ENCODE measurements at regions of chr17 and their contacts with region 1.

Region 1: DNA sequence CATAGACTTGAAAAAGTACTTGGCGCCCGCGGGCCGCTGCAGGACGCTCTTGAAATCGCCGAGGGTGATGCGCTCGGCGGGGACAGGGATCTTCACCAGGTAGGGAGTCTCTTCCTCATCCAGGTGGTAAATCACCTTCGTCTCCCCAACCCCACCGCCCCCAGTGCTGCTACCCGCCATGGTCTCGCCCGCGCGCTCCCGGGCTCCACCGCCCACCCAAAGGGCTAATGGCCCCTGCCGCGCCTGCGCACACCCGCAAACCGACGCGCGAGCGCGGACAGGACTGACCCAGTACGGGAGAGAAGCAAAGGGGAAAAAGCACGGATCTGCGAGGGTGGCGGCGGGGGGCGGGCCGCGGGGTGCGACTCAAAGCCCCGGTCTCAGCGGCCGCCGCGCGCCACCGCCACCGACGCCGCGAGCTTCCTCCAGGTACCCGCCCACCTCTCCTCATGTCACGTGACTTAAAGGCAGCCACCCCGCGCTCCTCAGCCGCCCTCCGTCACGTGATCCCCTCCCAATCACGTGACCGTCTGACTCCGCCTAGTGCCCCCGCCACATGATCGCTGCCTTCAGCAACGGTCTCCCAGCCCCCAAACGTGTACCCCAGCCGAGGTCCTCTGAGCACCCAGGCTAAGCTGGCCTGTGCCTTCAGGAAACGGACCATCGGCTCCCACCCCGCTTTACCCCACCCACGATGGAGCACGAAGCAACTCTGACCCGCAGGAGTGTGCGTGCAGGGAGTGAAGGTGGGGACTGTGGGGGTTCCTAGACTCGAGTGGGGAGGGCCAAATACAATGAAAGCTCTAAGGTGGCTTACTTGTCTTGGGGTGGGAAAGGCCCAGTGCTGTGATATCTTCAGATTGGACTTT is at the start of gene DVL2:
- DNase-seq: peak; percentile 97
- ATAC-seq: peak; percentile 40
- H3K4me3 Mint-ChIP-seq: peak within 1 kb of the TSS; percentile 97
- H3K27ac Mint-ChIP-seq: peak within 1 kb of the TSS; percentile 91
- H3K4me1 Mint-ChIP-seq: peaks cover 49% of the 10 kb centered on the region
- H3K27me3 Mint-ChIP-seq: no peaks in the 10 kb centered on the region
- total RNA-seq, gene DVL2: 49.1 to 53.3 TPM

Region 2: DNA sequence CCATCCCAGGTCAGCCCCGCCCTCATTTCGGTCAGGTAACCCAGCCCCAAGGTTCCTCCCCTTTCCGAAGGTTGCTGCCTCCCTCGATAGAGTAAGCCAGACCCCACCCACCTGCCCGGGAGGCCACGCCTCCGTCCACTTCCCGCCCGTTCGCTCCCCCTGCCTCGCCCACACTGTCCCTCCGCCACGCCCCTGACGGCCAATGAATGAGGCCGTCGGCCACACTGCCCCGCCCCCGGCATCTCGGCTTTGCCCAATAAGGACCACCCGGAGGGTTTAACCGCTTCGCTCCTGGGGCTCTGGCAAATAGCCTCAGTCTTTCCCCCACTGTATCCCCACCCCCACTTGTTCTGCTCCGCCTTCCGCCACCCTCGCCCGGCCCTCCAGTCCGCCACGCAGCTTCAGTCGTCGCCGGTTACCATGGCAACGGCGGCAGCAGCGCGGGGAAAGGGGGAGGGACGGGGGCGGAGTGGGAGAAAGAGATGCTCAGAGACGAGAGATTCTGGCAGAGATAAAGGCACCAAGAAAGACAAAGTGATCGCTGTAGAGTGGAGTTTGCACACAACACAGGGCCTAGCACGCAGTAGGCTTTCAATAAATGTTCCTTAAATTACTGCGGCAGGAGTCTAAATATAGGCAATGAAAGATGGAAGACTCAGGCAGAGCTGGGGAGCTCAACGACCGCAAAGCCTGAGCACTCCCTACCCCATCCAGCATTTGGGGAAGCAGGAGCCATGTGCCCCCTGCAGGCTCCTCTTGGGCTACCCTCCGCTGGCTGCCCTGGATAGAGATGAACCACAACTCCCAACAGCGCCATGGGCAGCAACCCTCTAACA is 19.8 kb before region 1 on chr17:
- CTCF ChIA-PET with region 1: interaction called, 25 read pairs
- POLR2A ChIA-PET with region 1: interaction called, 7 read pairs
- intact Hi-C with region 1: loop called (anchors 1 kb)
- DNase-seq: peak; percentile 100
- ATAC-seq: peak; percentile 82
- H3K4me3 Mint-ChIP-seq: peak overlapping the region; percentile 81
- H3K27ac Mint-ChIP-seq: peak overlapping the region; percentile 93
- H3K4me1 Mint-ChIP-seq: peaks cover 71% of the 10 kb centered on the region
- H3K27me3 Mint-ChIP-seq: peaks cover 7% of the 10 kb centered on the region

Region 3: DNA sequence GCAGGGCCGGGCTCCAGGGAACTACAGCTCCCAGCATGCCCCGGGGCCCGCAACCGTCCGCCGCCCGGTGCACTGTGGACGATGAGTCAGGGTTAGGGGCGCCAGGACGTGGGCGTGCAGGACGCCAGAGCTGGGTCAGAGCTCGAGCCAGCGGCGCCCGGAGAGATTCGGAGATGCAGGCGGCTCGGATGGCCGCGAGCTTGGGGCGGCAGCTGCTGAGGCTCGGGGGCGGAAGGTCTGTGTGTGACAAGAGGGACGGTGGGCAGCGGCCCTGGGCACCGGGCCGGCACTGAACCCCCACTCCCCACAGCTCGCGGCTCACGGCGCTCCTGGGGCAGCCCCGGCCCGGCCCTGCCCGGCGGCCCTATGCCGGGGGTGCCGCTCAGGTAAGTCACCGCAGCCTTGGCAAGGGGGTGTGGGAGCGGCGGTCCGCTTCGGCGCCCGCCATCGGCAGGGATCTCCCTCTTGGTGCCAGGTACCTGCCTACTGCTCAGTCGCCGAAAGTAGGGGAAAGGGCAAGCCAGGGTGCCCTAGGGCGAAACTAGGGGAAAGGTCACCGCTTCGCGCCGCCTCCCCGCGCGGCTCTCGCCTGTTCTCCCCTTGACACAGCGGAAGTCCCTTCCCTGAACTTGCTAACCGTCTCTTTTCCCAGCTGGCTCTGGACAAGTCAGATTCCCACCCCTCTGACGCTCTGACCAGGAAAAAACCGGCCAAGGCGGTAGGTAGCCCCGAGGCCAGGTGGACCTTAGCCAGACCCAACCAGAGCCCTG is 14.3 kb before region 1 on chr17 and contains the starts of genes ACADVL and DLG4:
- CTCF ChIA-PET with region 1: interaction called, 25 read pairs
- POLR2A ChIA-PET with region 1: interaction called, 7 read pairs
- intact Hi-C with region 1: loop called (anchors 1 kb)
- DNase-seq: peak; percentile 94
- ATAC-seq: peak; percentile 73
- H3K4me3 Mint-ChIP-seq: peak within 1 kb of the TSS; percentile 89
- H3K27ac Mint-ChIP-seq: peak within 1 kb of the TSS; percentile 96
- H3K4me1 Mint-ChIP-seq: peaks cover 48% of the 10 kb centered on the region
- H3K27me3 Mint-ChIP-seq: no peaks in the 10 kb centered on the region
- total RNA-seq, gene ACADVL: 263 to 345 TPM
- total RNA-seq, gene DLG4: 11.7 to 15.4 TPM